Heart right ventricle (tissue), 16 donors: ENCODE measurements at regions of chr3 and their contacts with region 1.

Region 1: DNA sequence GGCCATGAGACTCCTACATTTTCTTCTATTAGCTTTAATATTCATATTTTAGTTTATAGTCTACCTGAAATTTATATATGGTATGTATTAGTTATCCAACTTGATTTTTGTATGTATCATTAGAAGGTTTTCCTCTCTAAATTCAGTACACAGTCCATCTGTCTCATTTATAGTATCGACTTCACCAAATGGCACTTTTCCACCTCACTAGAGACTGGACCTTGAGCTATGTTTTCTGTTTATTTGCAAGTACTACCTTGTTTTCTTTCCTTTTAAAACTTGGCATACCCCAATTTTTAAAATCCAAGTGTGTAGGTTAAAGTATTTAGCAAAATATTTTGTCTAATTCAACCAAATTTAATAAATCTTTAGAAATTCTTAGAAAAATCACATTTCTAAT is 1137.5 kb downstream of the NSUN3 start:
- DNase-seq: no peak
- ATAC-seq: no peak
- H3K4me3 ChIP-seq: no peak overlapping the region
- H3K27ac ChIP-seq: no peak overlapping the region
- H3K4me1 ChIP-seq: no peaks in the 10 kb centered on the region
- H3K27me3 ChIP-seq: no peaks in the 10 kb centered on the region
- CTCF ChIP-seq: no peak

Region 2: DNA sequence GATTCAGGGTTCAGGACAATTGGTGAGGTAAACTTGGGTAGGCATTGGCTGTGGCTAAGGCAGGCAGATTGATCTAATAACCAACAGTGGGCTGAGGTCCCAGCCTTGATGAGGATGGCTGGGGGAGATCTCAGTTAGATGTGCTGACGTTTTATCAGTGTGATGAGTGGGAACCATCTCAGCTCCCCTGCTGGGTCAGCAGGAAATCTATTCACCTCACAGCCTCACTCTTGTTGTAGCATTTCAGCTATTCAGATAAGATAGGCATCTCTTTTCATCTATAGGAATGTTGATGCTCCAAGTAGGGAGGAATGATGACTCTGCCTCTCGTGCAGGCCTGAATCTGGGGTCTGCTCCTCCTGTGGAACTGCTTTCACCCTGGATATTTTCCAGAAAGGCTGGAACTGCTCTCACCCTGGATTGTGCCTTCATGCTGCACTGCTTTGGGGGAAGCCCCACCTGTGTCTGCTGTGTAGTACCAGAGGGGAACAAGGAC is 163.8 kb before region 1 on chr3:
- intact Hi-C with region 1: loop called in 1 of 10 experiments (anchors 5 kb)
- DNase-seq: no peak
- ATAC-seq: no peak
- H3K4me3 ChIP-seq: no peak overlapping the region
- H3K27ac ChIP-seq: no peak overlapping the region
- H3K4me1 ChIP-seq: no peaks in the 10 kb centered on the region
- H3K27me3 ChIP-seq: no peaks in the 10 kb centered on the region
- CTCF ChIP-seq: no peak

Region 3: DNA sequence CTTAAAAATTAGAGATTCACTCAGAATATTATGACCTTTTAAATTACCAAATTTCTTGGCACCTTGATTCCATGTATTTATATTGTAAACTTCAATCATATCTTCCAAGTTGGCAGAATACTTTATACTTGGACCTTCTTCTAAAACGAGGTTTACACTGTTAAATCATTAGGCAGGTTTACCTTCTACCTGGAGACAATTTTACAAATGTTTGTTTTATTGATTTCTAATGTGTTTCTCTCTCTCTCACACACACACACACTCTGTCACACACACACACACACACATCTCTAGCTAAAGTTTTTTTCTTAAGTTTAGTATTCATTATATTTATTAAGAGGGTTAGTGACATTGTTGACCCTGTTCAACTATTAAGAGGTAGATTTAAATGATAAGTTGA is 18.1 kb after region 1 on chr3:
- intact Hi-C with region 1: no loop called
- DNase-seq: no peak
- ATAC-seq: no peak
- H3K4me3 ChIP-seq: no peak overlapping the region
- H3K27ac ChIP-seq: no peak overlapping the region
- H3K4me1 ChIP-seq: no peaks in the 10 kb centered on the region
- H3K27me3 ChIP-seq: no peaks in the 10 kb centered on the region
- CTCF ChIP-seq: no peak

Region 4: DNA sequence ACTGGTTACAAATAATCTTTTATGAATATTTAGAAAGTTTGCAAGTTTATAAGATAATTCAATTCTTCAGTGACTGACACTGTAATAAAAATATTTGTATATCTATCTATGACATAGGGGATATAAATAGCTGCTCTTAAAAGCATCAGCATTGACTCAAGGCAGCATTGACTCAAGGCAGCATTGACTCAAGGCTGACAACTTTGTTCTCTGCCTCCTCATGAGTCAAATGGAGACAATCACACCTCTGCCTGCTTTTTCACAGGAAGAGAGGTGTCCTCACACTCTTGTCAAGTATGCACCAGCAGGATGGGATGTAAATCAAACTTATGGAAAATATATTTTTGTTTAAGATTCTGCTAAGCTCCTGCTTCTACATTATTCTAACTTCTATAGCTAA is 35.5 kb after region 1 on chr3:
- intact Hi-C with region 1: no loop called
- DNase-seq: no peak
- ATAC-seq: no peak
- H3K4me3 ChIP-seq: no peak overlapping the region
- H3K27ac ChIP-seq: no peak overlapping the region
- H3K4me1 ChIP-seq: no peaks in the 10 kb centered on the region
- H3K27me3 ChIP-seq: no peaks in the 10 kb centered on the region
- CTCF ChIP-seq: no peak